Uterus (tissue), 4 donors: ENCODE measurements at regions of chr2 and their contacts with region 1.

Region 1: GRCh38 chr2:176638167-176639015 is 369.1 kb downstream of the MTX2 start:
- DNase-seq: peak; percentile 77 to 83
- H3K4me3 ChIP-seq: peak overlapping the region; percentile 70 to 90
- H3K27ac ChIP-seq: peak overlapping the region; percentile 95 to 98
- H3K4me1 ChIP-seq: peaks cover 0 to 5% of the 10 kb centered on the region in 2 donors
- H3K27me3 ChIP-seq: no peaks in the 10 kb centered on the region
- CTCF ChIP-seq: peak; percentile 63 to 87 (median 78)
- POLR2A ChIP-seq: no peak

Region 2: GRCh38 chr2:176126929-176127773 is 511.2 kb before region 1 on chr2:
- intact Hi-C with region 1: loop called (anchors 5 kb)
- DNase-seq: peak; percentile 81 to 88
- H3K4me3 ChIP-seq: peak overlapping the region; percentile 15 to 16
- H3K27ac ChIP-seq: peak overlapping the region; percentile 98 to 99
- H3K4me1 ChIP-seq: no peaks in the 10 kb centered on the region
- H3K27me3 ChIP-seq: no peaks in the 10 kb centered on the region
- CTCF ChIP-seq: peak; percentile 84 to 95 (median 89)
- POLR2A ChIP-seq: peak; percentile 19 to 30

Region 3: DNA sequence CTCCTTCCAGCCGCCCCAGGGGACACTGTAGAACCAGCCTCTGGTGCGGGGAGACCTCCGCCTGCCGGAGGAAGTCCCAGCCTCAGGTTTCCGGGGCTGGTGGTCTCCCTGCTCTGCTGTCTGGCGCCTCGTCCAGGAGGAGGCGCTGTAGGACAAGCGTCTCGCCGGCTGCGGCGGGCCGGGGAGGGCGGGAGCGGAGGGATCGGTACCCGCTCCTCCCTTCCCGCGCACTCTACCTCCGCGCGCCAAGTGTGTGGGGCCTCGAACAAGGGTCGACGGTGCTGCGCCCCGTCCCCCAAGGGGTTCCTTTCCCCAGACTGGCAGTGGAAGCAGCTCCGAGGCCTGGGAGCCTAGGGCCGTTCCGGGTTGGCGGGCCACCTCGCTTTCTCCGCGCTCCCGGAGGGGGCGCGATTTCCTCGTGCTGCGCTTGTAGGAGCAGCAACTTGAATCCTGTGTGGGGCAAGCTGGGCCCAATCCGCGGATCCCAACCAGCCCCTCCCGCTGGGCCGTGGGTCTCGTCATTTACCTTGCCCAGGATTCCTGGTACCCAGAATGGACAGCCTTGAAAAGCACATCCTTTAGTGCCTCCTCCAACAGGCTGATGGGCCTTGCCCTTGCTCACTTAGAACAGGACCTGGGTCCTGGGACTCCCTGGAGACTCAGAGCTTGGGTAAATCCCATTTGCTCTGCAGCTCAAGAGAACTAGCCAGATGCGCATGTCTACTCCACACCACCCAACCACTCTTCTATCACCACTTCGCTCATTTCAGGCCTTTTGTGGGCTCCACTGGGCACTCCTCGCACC is 497.7 kb before region 1 on chr2:
- intact Hi-C with region 1: loop called (anchors 5 kb)
- DNase-seq: peak; percentile 81 to 88
- H3K4me3 ChIP-seq: peak overlapping the region; percentile 72 to 85
- H3K27ac ChIP-seq: peak overlapping the region; percentile 98 to 99
- H3K4me1 ChIP-seq: peaks cover 8 to 10% of the 10 kb centered on the region in 2 donors
- H3K27me3 ChIP-seq: no peaks in the 10 kb centered on the region
- CTCF ChIP-seq: peak; percentile 94 to 99 (median 96)
- POLR2A ChIP-seq: peak in 1 of 2 donors; percentile 43

Region 4: GRCh38 chr2:176554101-176555048 is 84.0 kb before region 1 on chr2:
- intact Hi-C with region 1: loop called (anchors 5 kb)
- DNase-seq: peak; percentile 38 to 52
- H3K4me3 ChIP-seq: peak overlapping the region; percentile 37 to 51
- H3K27ac ChIP-seq: peak overlapping the region; percentile 90 to 94
- H3K4me1 ChIP-seq: peaks cover 0 to 10% of the 10 kb centered on the region in 2 donors
- H3K27me3 ChIP-seq: no peaks in the 10 kb centered on the region
- CTCF ChIP-seq: peak; percentile 74 to 91 (median 84)
- POLR2A ChIP-seq: peak in 1 of 2 donors; percentile 9